Activated naive CD4-positive, alpha-beta T cell treated with anti-CD3 and anti-CD28 coated beads for 36 hours (primary cell): ENCODE measurements at regions of chr9 and their contacts with region 1.

Region 1: GRCh38 chr9:25964239-25964638 is 286.0 kb upstream of the TUSC1 start:
- DNase-seq: peak; percentile 7
- H3K4me3 Mint-ChIP-seq: no peak overlapping the region
- H3K27ac Mint-ChIP-seq: no peak overlapping the region
- H3K4me1 Mint-ChIP-seq: no peaks in the 10 kb centered on the region
- H3K27me3 Mint-ChIP-seq: no peaks in the 10 kb centered on the region

Region 2: DNA sequence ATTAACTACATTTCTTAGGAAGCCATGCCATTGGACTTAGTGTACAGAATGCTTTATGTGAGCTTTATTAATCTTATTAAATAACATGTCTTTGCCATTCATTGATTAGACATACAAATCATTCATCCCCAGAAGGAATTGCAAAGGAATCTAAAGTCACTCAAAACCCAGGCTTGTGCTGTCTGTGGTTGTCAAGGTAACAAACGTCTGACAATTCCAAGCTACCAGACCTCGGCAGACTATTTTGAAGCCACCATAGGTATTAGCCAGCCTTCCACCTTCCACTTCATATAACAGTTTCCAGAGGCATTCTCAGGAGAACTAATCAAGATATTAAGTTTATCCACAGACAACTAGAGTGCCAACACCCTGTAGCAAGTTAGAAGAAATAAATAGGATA is 150.8 kb before region 1 on chr9:
- CTCF ChIA-PET with region 1: no interaction called
- intact Hi-C with region 1: no loop called
- DNase-seq: no peak
- H3K4me3 Mint-ChIP-seq: no peak overlapping the region
- H3K27ac Mint-ChIP-seq: no peak overlapping the region
- H3K4me1 Mint-ChIP-seq: no peaks in the 10 kb centered on the region
- H3K27me3 Mint-ChIP-seq: no peaks in the 10 kb centered on the region

Region 3: GRCh38 chr9:25827626-25828025 is 136.6 kb before region 1 on chr9:
- CTCF ChIA-PET with region 1: no interaction called
- intact Hi-C with region 1: no loop called
- DNase-seq: no peak
- H3K4me3 Mint-ChIP-seq: no peak overlapping the region
- H3K27ac Mint-ChIP-seq: no peak overlapping the region
- H3K4me1 Mint-ChIP-seq: no peaks in the 10 kb centered on the region
- H3K27me3 Mint-ChIP-seq: no peaks in the 10 kb centered on the region

Region 4: GRCh38 chr9:26043431-26043830 is 79.2 kb after region 1 on chr9:
- CTCF ChIA-PET with region 1: no interaction called
- intact Hi-C with region 1: no loop called
- DNase-seq: no peak
- H3K4me3 Mint-ChIP-seq: no peak overlapping the region
- H3K27ac Mint-ChIP-seq: no peak overlapping the region
- H3K4me1 Mint-ChIP-seq: no peaks in the 10 kb centered on the region
- H3K27me3 Mint-ChIP-seq: no peaks in the 10 kb centered on the region

Region 5: DNA sequence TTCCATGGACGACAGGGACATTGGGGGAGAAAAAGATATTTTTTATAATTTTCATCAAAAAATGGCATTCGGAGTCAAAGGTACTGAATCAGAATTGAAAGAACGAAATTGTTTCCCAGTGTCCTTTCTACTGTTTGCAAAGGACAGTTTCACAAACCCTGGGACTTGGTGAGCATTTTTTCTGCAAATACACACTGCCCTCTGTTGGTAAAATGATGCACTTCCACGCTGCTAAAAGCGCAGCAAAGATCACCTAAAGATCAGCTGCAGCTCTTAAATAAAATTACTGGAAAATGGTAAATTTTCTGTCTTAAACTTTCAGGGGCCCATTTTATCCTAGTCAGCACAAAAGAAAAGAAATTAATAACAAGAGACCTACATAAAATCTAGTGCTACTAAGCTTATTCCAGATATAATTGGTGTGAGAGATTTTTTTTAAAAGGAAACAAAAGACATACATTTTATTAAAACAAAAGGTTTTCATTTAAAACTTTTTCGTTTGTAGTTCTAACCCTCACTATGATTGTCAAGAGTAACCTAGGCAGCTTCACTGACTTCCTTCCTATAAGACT is 362.3 kb after region 1 on chr9:
- CTCF ChIA-PET with region 1: no interaction called
- intact Hi-C with region 1: loop called (anchors 2 kb)
- DNase-seq: peak; percentile 12
- H3K4me3 Mint-ChIP-seq: no peak overlapping the region
- H3K27ac Mint-ChIP-seq: no peak overlapping the region
- H3K4me1 Mint-ChIP-seq: no peaks in the 10 kb centered on the region
- H3K27me3 Mint-ChIP-seq: no peaks in the 10 kb centered on the region

Region 6: GRCh38 chr9:26471261-26471660 is 507.0 kb after region 1 on chr9:
- CTCF ChIA-PET with region 1: no interaction called
- intact Hi-C with region 1: no loop called
- DNase-seq: no peak
- H3K4me3 Mint-ChIP-seq: no peak overlapping the region
- H3K27ac Mint-ChIP-seq: no peak overlapping the region
- H3K4me1 Mint-ChIP-seq: no peaks in the 10 kb centered on the region
- H3K27me3 Mint-ChIP-seq: no peaks in the 10 kb centered on the region